Ovary (tissue), 10 donors: ENCODE measurements at regions of chr15 and their contacts with region 1.

Region 1: GRCh38 chr15:98292442-98293240 is 332.1 kb downstream of the ARRDC4 start:
- DNase-seq: no peak
- H3K4me3 ChIP-seq: no peak overlapping the region
- H3K27ac ChIP-seq: no peak overlapping the region
- H3K4me1 ChIP-seq: no peaks in the 10 kb centered on the region
- H3K27me3 ChIP-seq: no peaks in the 10 kb centered on the region
- CTCF ChIP-seq: no peak
- EP300 ChIP-seq: no peak
- POLR2A ChIP-seq: no peak

Region 2: GRCh38 chr15:97909291-97909891 is 383.2 kb before region 1 on chr15:
- intact Hi-C with region 1: loop called in 1 of 4 experiments (anchors 10 kb)
- DNase-seq: peak; percentile 12 to 59 (median 32)
- H3K4me3 ChIP-seq: no peak overlapping the region
- H3K27ac ChIP-seq: no peak overlapping the region
- H3K4me1 ChIP-seq: no peaks in the 10 kb centered on the region
- H3K27me3 ChIP-seq: no peaks in the 10 kb centered on the region
- CTCF ChIP-seq: peak in 2 of 3 donors; percentile 32 to 41
- EP300 ChIP-seq: no peak
- POLR2A ChIP-seq: no peak

Region 3: GRCh38 chr15:98850961-98851573 is 558.4 kb after region 1 on chr15:
- intact Hi-C with region 1: no loop called
- DNase-seq: peak; percentile 68 to 79 (median 77)
- H3K4me3 ChIP-seq: no peak overlapping the region
- H3K27ac ChIP-seq: peak overlapping the region; percentile 86 to 94
- H3K4me1 ChIP-seq: peaks cover 33% of the 10 kb centered on the region
- H3K27me3 ChIP-seq: no peaks in the 10 kb centered on the region
- CTCF ChIP-seq: peak; percentile 38 to 79 (median 59)
- EP300 ChIP-seq: no peak
- POLR2A ChIP-seq: no peak